Common myeloid progenitor, CD34-positive (primary cell): ENCODE measurements at regions of chr21 and their contacts with region 1.

Region 1: GRCh38 chr21:40120940-40121575 is 253.8 kb downstream of the PCP4 start:
- DNase-seq: peak; percentile 21 to 43 (median 31)
- H3K4me3 ChIP-seq: no peak overlapping the region
- H3K27ac ChIP-seq: no peak overlapping the region
- H3K4me1 ChIP-seq: no peaks in the 10 kb centered on the region
- H3K27me3 ChIP-seq: peaks cover 0 to 10% (median 2%) of the 10 kb centered on the region in 5 experiments

Region 2: DNA sequence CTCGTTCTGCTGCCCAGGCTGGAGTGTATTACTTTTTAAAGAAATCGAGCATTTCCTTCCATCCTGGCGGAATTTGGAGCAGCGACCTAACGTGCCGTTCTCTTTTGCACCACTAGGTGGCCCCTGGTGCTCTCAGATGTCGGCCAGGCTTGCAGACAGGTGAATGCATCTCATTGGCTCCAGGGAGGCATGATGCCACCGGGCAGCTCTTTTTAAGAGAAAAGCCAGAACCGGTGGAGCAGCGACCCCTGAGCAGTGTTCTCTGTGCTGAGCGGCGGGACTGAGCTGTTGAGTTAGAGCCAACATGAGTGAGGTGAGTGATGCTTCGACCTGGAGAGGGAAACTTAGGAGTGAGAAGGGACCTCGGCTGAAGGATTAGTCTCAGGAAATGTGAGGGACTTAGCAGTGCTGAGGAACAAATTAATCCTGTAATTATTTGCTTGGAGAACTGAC is 253.8 kb before region 1 on chr21 and contains the start of gene PCP4:
- CTCF ChIA-PET with region 1: interaction called, 17 read pairs
- POLR2A ChIA-PET with region 1: no interaction called
- DNase-seq: peak; percentile 22 to 45 (median 26)
- H3K4me3 ChIP-seq: no peak within 1 kb of the TSS
- H3K27ac ChIP-seq: no peak within 1 kb of the TSS
- H3K4me1 ChIP-seq: no peaks in the 10 kb centered on the region
- H3K27me3 ChIP-seq: peaks cover 2 to 30% (median 9%) of the 10 kb centered on the region in 5 experiments

Region 3: DNA sequence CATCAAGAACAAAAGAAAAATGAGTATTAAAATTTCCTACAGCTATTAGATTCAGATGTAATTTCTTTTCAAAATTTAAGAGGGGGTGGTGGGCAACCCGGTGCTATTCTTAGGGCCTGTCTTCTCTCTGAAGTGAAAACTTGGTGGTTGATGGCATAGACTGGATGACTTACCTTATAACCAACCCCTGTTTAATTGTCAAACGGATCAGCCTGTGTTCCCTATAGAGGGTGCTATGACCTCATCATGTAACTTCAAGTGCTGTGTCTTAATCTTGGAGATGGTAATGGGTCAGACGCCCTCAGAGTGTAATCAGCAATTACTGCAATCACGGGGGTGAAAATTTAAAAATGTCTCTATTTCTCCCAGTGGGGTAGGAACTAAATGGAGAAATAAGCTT is 77.6 kb before region 1 on chr21:
- CTCF ChIA-PET with region 1: interaction called, 30 read pairs
- POLR2A ChIA-PET with region 1: no interaction called
- DNase-seq: peak; percentile 14 to 19 (median 19)
- H3K4me3 ChIP-seq: no peak overlapping the region
- H3K27ac ChIP-seq: no peak overlapping the region
- H3K4me1 ChIP-seq: no peaks in the 10 kb centered on the region
- H3K27me3 ChIP-seq: no peaks in the 10 kb centered on the region

Region 4: DNA sequence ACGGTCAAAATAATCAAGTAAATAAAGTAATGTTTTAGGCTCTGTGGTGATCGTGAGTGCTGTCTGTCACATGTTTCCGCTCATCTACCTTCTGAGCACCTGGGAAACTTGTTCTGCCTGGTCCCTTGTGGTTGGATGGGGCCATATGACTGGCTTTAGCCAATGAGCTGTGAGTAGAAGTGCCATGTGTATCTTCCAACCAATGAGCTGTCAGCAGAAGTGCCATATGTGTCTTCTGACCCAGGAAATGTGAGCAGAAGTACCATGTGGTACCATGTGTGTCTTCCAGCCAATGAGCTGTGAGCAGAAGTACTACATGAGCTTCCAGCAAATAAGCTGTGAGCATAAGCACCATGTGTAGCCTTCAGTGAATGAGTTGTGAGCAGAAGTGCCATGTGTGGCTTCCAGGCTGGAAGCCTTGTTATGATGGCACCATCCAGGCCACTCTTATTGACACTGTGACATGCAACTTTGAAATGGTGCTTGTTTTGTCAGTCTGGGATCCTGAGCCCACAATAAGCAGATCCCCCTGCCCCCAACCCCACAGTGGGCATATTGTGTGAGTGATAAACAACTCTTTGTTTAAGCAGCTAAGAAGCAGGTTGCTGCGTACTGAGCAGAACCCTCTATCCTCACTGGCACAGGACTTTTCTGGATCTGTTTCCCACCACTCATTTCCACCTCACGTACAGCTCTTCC is 121.3 kb after region 1 on chr21:
- CTCF ChIA-PET with region 1: no interaction called
- POLR2A ChIA-PET with region 1: no interaction called
- DNase-seq: no peak
- H3K4me3 ChIP-seq: no peak overlapping the region
- H3K27ac ChIP-seq: no peak overlapping the region
- H3K4me1 ChIP-seq: no peaks in the 10 kb centered on the region
- H3K27me3 ChIP-seq: no peaks in the 10 kb centered on the region